ENCODE measurements at regions of chr3 and their contacts with region 1.

Region 1: GRCh38 chr3:64023187-64023848 is at the start of gene PSMD6:
- DNase-seq: peak; percentile 86 to 96 (median 93)
- ATAC-seq: peak; percentile 94
- H3K4me3 ChIP-seq: peak within 1 kb of the TSS; percentile 90 to 96
- H3K4me3 Mint-ChIP-seq: peak within 1 kb of the TSS; percentile 91
- H3K27ac ChIP-seq: peak within 1 kb of the TSS; percentile 86 to 89
- H3K27ac Mint-ChIP-seq: peak within 1 kb of the TSS; percentile 93
- H3K4me1 ChIP-seq: peaks cover 29% of the 10 kb centered on the region
- H3K4me1 Mint-ChIP-seq: peaks cover 33% of the 10 kb centered on the region
- H3K27me3 ChIP-seq: no peaks in the 10 kb centered on the region
- H3K27me3 Mint-ChIP-seq: peaks cover 14% of the 10 kb centered on the region
- CTCF ChIP-seq: peak; percentile 99
- total RNA-seq, gene PSMD6: 134 to 138 TPM

Region 2: DNA sequence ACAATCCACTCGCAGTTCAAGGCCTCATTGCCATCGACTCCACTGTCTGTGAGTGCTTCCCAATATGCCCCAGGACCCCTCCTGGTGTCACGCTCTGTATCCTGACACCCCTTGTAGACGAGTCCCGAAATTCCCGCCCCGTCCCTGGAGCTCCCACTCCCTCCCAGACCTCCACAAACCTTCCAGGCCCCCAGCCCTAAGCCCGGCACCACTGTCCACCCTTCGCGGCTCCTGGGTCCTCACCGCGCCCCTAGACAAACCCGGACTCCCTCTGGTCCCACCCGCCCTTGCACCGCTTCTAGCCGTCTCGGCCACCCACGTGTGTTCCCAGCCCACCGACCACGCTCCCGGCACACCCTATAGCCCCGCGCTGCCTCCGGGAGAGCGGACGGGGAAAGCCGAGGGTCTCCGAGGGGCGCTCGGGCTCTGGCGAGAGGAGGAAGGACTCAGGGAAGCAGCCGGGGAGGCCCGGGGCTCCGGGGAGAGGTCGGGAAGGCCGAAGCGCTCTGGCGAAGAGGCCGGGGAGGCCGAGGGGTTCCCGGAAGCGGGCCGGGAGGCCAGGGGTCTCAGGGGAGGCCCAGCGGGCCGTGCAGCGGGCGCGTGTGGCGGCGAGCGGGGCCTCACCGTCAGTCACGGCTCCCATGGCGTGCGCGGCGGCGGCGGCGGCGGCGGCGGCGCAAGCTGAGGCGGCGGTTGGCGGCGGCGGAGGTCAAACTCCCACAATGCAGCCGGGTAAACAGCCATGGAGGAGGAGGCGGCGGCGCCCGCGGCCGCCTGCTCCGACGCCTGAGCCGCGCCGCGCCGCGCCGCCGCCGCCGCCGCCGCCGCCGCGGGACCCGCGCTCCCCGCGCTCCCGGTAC is 159.9 kb before region 1 on chr3 and contains the starts of genes ATXN7 and THOC7:
- CTCF ChIA-PET with region 1: no interaction called
- POLR2A ChIA-PET with region 1: interaction called, 5 read pairs
- intact Hi-C with region 1: loop called (anchors 1 to 5 kb)
- DNase-seq: peak; percentile 45 to 85 (median 70)
- ATAC-seq: peak; percentile 75
- H3K4me3 ChIP-seq: peak within 1 kb of the TSS; percentile 71 to 89
- H3K4me3 Mint-ChIP-seq: peak within 1 kb of the TSS; percentile 94
- H3K27ac ChIP-seq: peak within 1 kb of the TSS; percentile 60 to 63
- H3K27ac Mint-ChIP-seq: peak within 1 kb of the TSS; percentile 93
- H3K4me1 ChIP-seq: peaks cover 19% of the 10 kb centered on the region
- H3K4me1 Mint-ChIP-seq: peaks cover 64% of the 10 kb centered on the region
- H3K27me3 ChIP-seq: no peaks in the 10 kb centered on the region
- H3K27me3 Mint-ChIP-seq: no peaks in the 10 kb centered on the region
- CTCF ChIP-seq: no peak
- total RNA-seq, gene ATXN7: 273 to 278 TPM
- total RNA-seq, gene THOC7: 23.0 to 25.5 TPM

Region 3: GRCh38 chr3:63911873-63912767 is 111.2 kb before region 1 on chr3 and contains the start of gene SCAANT1:
- CTCF ChIA-PET with region 1: no interaction called
- POLR2A ChIA-PET with region 1: interaction called, 3 read pairs
- intact Hi-C with region 1: loop called (anchors 1 kb)
- DNase-seq: peak; percentile 64 to 92 (median 81)
- ATAC-seq: peak; percentile 66
- H3K4me3 ChIP-seq: peak within 1 kb of the TSS; percentile 76 to 85
- H3K4me3 Mint-ChIP-seq: peak within 1 kb of the TSS; percentile 92
- H3K27ac ChIP-seq: peak within 1 kb of the TSS; percentile 82 to 84
- H3K27ac Mint-ChIP-seq: peak within 1 kb of the TSS; percentile 95
- H3K4me1 ChIP-seq: peaks cover 15% of the 10 kb centered on the region
- H3K4me1 Mint-ChIP-seq: peaks cover 42% of the 10 kb centered on the region
- H3K27me3 ChIP-seq: no peaks in the 10 kb centered on the region
- H3K27me3 Mint-ChIP-seq: no peaks in the 10 kb centered on the region
- CTCF ChIP-seq: no peak
- total RNA-seq, gene SCAANT1: not detected

Region 4: DNA sequence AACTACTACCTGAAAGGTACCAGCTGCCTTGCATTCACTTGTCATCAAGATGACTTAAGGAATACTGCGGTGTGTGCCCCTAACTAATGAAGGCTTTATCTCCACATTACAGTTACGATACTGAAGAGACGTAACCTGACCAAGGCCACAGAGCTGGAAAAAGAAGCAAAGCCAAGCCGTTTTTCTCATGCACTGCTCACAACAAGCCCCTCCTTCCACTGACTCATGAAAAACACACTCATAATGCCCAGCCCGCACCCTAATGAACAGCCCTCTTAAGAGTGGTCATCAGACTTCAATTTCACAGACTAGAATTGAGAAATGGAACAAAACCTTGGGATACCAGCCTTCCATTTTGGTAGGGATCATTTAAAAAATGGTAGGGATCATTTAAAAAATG is 11.6 kb before region 1 on chr3:
- CTCF ChIA-PET with region 1: interaction called, 12 read pairs
- POLR2A ChIA-PET with region 1: interaction called, 5 read pairs
- intact Hi-C with region 1: no loop called
- DNase-seq: no peak
- ATAC-seq: no peak
- H3K4me3 ChIP-seq: no peak overlapping the region
- H3K4me3 Mint-ChIP-seq: no peak overlapping the region
- H3K27ac ChIP-seq: no peak overlapping the region
- H3K27ac Mint-ChIP-seq: peak overlapping the region; percentile 10
- H3K4me1 ChIP-seq: no peaks in the 10 kb centered on the region
- H3K4me1 Mint-ChIP-seq: peaks cover 36% of the 10 kb centered on the region
- H3K27me3 ChIP-seq: no peaks in the 10 kb centered on the region
- H3K27me3 Mint-ChIP-seq: no peaks in the 10 kb centered on the region
- CTCF ChIP-seq: no peak

Region 5: DNA sequence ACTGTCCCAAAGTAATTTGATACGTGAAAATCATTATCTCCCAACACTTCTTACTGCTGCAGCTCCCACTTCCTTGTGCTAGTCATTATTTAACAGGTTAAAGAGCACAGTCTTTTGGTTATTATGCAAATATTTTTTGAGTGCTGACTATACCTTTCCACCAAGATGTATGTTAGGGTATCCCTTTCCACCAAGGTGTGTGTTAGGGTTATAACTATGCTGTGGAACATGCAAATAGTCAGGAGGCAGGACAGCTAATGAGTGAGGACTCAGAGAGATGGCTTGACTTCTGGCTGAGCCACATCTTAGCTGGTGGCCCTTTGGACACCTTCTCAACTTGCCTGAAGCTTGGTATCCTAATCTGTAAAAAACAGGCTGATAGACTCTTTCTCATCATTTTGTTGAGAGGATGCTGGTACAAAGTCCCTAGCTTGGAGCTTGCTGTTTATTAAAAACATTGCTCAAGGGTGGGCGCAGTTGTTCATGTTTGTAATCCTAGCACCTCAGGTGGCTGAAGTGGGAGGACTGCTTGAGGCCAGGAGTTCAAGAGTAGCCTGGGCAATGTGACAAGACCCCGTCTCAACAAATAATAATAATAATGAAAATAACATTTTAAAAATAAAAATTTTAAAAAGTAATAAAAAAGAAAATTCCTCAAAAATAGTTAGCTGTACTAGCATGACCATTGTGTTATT is 824.9 kb after region 1 on chr3:
- CTCF ChIA-PET with region 1: no interaction called
- POLR2A ChIA-PET with region 1: no interaction called
- intact Hi-C with region 1: no loop called
- DNase-seq: no peak
- ATAC-seq: no peak
- H3K4me3 ChIP-seq: no peak overlapping the region
- H3K4me3 Mint-ChIP-seq: no peak overlapping the region
- H3K27ac ChIP-seq: no peak overlapping the region
- H3K27ac Mint-ChIP-seq: no peak overlapping the region
- H3K4me1 ChIP-seq: no peaks in the 10 kb centered on the region
- H3K4me1 Mint-ChIP-seq: no peaks in the 10 kb centered on the region
- H3K27me3 ChIP-seq: no peaks in the 10 kb centered on the region
- H3K27me3 Mint-ChIP-seq: no peaks in the 10 kb centered on the region
- CTCF ChIP-seq: no peak

Measured in CD8-positive, alpha-beta T cell (primary cell).